ENCODE measurements at regions of chr20 and their contacts with region 1.

Region 1: DNA sequence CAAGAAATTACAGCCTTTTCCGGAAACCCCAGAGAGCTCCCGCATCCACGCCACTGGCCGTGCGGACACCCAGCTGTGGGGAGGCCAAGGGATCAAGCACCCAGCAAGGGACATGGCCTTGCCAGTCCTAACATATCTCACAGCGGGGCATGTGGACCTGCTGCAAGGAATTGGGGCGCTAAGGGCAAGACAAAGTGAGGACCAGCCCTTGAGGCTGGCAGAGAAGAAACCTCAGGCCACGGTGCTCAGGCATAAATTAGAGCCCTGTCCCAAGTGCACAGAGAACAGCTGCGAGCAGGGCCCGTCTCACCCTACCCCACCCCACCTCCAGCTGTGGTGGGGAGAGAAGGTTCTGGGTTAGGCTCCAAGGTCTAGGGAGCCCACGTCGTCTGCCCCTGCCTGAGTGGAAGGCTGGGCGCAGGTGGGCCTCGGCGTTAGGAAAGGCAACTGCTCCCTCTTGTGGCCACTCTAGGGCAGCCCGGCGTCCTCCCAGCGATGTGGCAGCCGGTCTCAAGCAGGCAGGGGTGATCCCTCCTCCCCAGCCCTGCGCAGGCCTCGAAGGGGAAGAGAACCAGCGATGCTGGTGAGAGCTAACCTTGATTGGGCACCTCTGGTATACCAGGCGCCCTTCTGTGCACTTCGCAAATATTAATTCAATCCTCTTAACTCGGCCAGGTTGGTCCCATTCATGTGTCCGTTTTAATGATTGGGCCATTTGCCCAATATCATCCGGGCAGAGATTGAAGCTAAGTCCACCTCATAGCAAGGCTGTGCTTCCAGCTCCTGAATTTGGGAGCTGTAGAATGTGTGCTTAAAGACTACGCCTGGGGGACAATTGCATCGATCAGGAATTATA is 235.8 kb downstream of the NFATC2 start:
- DNase-seq: peak; percentile 65
- H3K4me3 ChIP-seq: no peak overlapping the region
- H3K27ac ChIP-seq: no peak overlapping the region
- H3K4me1 ChIP-seq: peaks cover 10% of the 10 kb centered on the region
- H3K27me3 ChIP-seq: peaks cover 15% of the 10 kb centered on the region
- CTCF ChIP-seq: peak; percentile 96

Region 2: GRCh38 chr20:50996901-50997865 is 309.5 kb before region 1 on chr20:
- intact Hi-C with region 1: loop called (anchors 5 kb)
- DNase-seq: no peak
- H3K4me3 ChIP-seq: no peak overlapping the region
- H3K27ac ChIP-seq: no peak overlapping the region
- H3K4me1 ChIP-seq: no peaks in the 10 kb centered on the region
- H3K27me3 ChIP-seq: peaks cover 73% of the 10 kb centered on the region
- CTCF ChIP-seq: no peak

Region 3: DNA sequence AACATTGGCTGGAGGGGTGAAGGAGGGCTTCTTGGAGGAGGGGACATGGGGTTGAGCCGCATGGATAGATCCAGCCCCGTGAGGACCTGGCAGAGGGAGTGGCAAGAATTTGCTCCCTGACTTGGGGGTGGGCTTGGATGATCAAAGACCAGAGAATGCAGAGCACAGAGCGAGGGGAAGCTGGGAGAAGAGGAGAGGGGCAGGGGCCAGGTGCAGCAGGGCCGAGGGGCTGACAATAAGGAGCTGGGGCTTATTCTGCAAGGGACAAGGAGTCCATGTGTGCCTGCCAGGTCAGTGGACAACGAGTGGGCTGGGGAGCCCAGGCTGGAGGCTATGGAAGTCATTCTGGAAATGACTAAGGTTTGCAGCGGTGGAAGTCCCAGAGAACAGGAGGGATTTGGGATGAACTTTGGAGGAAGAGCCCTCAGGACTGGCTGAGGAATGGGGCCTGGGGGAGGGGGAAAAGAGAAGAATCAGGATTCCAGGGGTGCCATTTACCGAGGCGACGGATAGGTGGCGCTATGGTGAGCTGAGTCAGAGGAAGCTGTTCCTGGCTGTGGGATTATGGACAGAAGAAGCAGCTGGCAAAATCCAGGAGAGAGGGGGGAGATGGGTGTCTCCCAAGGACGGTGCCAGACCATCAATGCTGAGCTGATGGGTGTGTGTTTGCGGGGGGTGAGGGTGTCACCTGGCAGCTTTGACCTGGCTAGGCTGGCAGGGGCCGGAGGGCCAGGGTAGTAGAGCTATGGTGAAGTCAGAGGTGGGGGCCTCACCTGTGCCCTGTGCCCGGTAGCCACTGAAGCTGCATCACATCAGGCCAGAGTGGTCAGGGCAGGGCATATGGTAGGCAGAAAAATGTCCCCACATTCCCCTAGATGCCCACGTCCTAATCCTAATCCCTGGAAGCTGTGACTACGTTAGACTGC is 291.7 kb before region 1 on chr20:
- intact Hi-C with region 1: no loop called
- DNase-seq: no peak
- H3K4me3 ChIP-seq: no peak overlapping the region
- H3K27ac ChIP-seq: no peak overlapping the region
- H3K4me1 ChIP-seq: no peaks in the 10 kb centered on the region
- H3K27me3 ChIP-seq: peaks cover 88% of the 10 kb centered on the region
- CTCF ChIP-seq: peak; percentile 60

Region 4: GRCh38 chr20:51237278-51237677 is 69.5 kb before region 1 on chr20:
- intact Hi-C with region 1: no loop called
- DNase-seq: peak; percentile 40
- H3K4me3 ChIP-seq: no peak overlapping the region
- H3K27ac ChIP-seq: peak overlapping the region; percentile 59
- H3K4me1 ChIP-seq: no peaks in the 10 kb centered on the region
- H3K27me3 ChIP-seq: peaks cover 43% of the 10 kb centered on the region
- CTCF ChIP-seq: no peak

Measured in left ventricle myocardium inferior (tissue), 1 donor.